Heart right ventricle (tissue), 16 donors: ENCODE measurements at regions of chr15 and their contacts with region 1.

Region 1: DNA sequence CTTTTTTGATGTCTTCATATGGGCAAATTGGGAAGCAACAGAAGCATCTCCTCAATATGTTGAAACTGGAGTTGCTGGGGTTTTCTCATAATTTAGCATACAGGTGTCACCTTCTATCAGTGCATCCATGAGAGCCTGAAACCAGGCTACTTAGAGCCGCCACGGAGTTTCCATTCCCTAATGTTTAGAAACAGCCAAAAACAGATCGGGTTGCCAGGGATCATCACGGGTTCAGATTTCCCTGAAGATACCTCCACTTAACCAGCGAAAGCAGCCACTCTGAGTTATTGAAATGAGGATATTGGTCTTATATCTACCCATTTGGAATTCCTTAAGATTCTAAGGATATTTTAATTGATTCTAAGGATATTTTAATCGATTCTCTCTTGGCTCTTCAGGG is 14.5 kb downstream of the TERB2 start:
- DNase-seq: no peak
- ATAC-seq: no peak
- H3K4me3 ChIP-seq: no peak overlapping the region
- H3K27ac ChIP-seq: no peak overlapping the region
- H3K4me1 ChIP-seq: no peaks in the 10 kb centered on the region
- H3K27me3 ChIP-seq: peaks cover 0 to 8% (median 3%) of the 10 kb centered on the region in 7 donors
- CTCF ChIP-seq: no peak

Region 2: GRCh38 chr15:45022871-45023658 is 52.0 kb after region 1 on chr15 and contains the start of gene SORD:
- intact Hi-C with region 1: loop called in 1 of 10 experiments (anchors 5 kb)
- DNase-seq: peak; percentile 91 to 96
- ATAC-seq: peak; percentile 98 to 100 (median 99)
- H3K4me3 ChIP-seq: peak within 1 kb of the TSS; percentile 48 to 90 (median 73)
- H3K27ac ChIP-seq: peak within 1 kb of the TSS in 9 of 10 donors; percentile 61 to 84 (median 81)
- H3K4me1 ChIP-seq: peaks cover 3 to 32% (median 13%) of the 10 kb centered on the region in 9 donors
- H3K27me3 ChIP-seq: peaks cover 0 to 18% (median 5%) of the 10 kb centered on the region in 7 donors
- CTCF ChIP-seq: no peak
- total RNA-seq, gene SORD: 8.3 to 15.2 (median 11.8) TPM

Region 3: GRCh38 chr15:45030743-45031142 is 59.7 kb after region 1 on chr15:
- intact Hi-C with region 1: loop called in 6 of 10 experiments (anchors 5 to 10 kb)
- DNase-seq: no peak
- ATAC-seq: no peak
- H3K4me3 ChIP-seq: no peak overlapping the region
- H3K27ac ChIP-seq: no peak overlapping the region
- H3K4me1 ChIP-seq: peaks cover 0 to 13% (median 0%) of the 10 kb centered on the region in 9 donors
- H3K27me3 ChIP-seq: no peaks in the 10 kb centered on the region
- CTCF ChIP-seq: no peak

Region 4: GRCh38 chr15:45037936-45038335 is 66.9 kb after region 1 on chr15:
- intact Hi-C with region 1: loop called in 7 of 10 experiments (anchors 2 to 10 kb)
- DNase-seq: no peak
- ATAC-seq: no peak
- H3K4me3 ChIP-seq: no peak overlapping the region
- H3K27ac ChIP-seq: no peak overlapping the region
- H3K4me1 ChIP-seq: peaks cover 0 to 9% (median 0%) of the 10 kb centered on the region in 9 donors
- H3K27me3 ChIP-seq: no peaks in the 10 kb centered on the region
- CTCF ChIP-seq: no peak

Region 5: DNA sequence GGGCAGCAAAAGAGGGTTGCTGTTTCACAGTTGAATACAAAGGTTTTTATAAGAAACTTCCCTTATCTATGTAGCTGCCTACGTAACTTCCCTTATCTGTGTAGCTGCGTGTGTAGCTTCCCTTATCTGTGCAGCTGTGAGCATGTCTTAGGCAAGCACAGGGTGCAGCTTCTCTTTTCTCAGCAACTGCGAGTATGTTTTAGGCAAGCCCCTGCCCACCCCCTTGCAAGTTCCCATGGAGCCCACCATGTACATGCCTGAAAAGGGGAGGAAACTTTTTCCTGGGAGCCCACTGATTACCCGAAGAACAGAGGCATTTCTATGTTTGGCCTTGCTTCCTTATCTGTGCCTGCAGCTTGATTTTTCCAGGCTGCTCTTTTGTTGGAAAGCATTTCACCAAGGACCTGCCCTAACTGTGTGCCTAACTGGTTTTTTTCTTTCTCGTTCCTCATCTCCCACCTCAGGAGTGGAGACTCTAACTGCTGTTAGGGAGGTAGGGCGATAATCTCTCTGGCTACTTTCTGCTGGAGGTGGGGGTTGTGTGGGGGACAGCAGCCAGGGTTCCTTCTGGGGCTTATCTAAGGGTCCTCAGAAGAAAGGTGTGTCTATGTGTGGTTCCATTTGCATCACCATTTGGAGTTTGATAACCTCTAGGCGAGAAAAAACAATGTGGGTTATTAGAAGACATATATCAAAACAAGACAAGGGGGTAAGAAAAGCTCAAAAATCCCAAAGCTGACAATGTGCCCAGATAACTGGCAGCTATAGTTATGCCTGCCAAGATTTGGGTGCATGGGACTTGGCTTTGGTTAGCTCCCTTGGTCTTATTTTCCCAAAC is 78.0 kb after region 1 on chr15:
- intact Hi-C with region 1: no loop called
- DNase-seq: peak in 1 of 2 donors; percentile 7
- ATAC-seq: peak; percentile 58 to 88 (median 74)
- H3K4me3 ChIP-seq: no peak overlapping the region
- H3K27ac ChIP-seq: peak overlapping the region in 5 of 10 donors; percentile 4 to 87 (median 36)
- H3K4me1 ChIP-seq: peaks cover 0 to 14% (median 0%) of the 10 kb centered on the region in 9 donors
- H3K27me3 ChIP-seq: no peaks in the 10 kb centered on the region
- CTCF ChIP-seq: no peak

Region 6: GRCh38 chr15:45118131-45118588 is 147.1 kb after region 1 on chr15:
- intact Hi-C with region 1: loop called in 2 of 10 experiments (anchors 5 kb)
- DNase-seq: peak; percentile 81 to 89
- ATAC-seq: peak; percentile 93 to 97 (median 96)
- H3K4me3 ChIP-seq: peak overlapping the region in 8 of 10 donors; percentile 16 to 44 (median 34)
- H3K27ac ChIP-seq: no peak overlapping the region
- H3K4me1 ChIP-seq: peaks cover 8 to 35% (median 15%) of the 10 kb centered on the region in 9 donors
- H3K27me3 ChIP-seq: peaks cover 22 to 94% (median 80%) of the 10 kb centered on the region in 7 donors
- CTCF ChIP-seq: peak; percentile 90 to 100 (median 99)